Natural killer cell (primary cell): ENCODE measurements at regions of chr21 and their contacts with region 1.

Region 1: DNA sequence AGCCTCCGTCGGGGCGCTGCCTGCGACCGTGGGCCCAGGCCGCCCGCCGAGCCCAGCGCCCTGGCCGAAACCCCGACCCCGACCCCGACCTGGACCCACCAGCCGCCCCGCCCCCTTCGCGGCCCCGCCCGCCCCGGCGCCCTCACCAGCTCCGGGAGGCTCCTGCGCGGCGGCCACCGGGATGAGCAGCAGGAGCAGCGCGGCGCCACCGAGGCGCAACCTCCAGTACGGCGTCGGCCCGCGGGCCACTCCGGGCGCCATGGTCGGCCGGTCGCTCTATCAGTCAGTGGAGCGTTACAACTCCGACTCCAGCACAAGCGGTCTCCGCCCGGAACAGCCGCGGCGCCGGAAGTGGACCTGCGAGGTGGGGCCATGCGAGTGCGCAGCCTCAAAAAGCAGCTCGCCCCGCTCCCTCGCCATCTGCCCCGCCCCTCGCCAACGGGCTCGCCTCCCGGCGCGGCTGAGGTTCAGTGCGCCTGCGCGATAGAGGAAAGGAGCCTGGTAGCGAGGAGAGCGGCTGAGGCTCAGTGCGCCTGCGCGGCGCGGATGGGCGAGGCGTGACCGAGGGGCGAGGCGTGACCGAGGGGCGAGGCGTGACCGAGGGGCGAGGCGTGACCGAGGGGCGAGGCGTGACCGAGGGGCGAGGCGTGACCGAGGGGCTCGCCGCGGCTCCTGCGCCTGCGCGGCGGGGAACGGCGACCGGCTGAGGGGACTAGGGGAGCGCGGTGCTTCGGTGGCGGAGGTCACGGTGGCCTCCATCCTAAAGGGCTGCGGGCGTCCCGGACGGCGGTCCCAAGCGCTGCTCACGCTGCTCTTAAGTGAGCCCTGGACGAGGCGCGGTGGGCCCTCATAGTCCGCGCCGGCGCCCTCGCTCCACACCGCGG is at the start of gene PTTG1IP:
- DNase-seq: peak; percentile 98 to 100
- ATAC-seq: peak; percentile 82 to 91 (median 83)
- H3K4me3 ChIP-seq: peak within 1 kb of the TSS; percentile 52
- H3K4me3 Mint-ChIP-seq: peak within 1 kb of the TSS; percentile 94
- H3K27ac ChIP-seq: peak within 1 kb of the TSS; percentile 85
- H3K27ac Mint-ChIP-seq: peak within 1 kb of the TSS; percentile 92 to 93
- H3K4me1 ChIP-seq: peaks cover 54% of the 10 kb centered on the region
- H3K4me1 Mint-ChIP-seq: peaks cover 47 to 50% of the 10 kb centered on the region in 2 donors
- H3K27me3 ChIP-seq: no peaks in the 10 kb centered on the region
- H3K27me3 Mint-ChIP-seq: no peaks in the 10 kb centered on the region
- CTCF ChIP-seq: no peak
- total RNA-seq, gene PTTG1IP: 96.8 to 144 (median 126) TPM

Region 2: DNA sequence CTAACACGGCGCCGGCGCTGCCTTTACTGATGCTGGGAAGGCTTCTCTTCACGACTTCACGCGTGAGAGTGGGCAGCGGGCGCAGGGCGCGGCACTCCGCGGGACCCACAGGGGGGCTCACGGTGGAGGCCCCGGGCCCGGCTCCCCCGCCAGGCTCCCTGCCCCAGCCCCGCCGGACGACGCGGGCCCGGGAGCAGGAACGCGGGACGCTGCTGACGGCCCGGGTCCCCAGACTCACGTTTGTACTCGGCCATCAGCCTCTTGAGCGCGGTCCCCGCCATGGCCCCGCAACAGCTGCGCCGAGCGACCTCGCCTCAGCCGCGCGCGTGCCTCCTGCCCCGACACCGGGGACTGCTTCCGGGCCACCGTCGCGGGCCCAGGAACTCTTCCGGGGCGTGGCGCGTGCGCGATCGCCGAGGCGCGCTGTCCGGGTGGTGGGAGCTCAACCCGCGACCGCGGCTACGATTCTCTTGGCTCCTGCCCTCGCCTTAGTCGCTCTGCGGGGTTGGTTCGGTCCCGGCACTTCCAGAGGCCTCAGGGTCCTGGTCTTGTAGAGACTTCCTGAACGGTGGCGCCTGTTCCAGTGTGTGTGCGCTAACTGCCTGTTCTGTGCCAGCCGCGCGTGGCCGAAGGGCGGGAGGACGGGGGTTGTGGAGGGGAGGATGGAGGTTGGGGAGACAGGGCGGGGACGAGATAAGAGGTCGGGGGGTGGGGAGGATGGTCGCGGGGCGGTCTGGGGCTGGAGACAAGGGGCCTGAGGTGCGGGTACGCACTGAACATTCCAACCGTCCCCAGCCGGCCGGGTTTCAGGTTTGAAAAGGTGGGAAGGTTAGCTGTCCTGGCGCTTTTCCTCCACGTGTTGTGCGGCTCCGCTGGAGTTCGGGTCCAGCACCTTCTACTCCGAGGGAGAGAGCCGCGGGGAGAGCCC is 71.9 kb before region 1 on chr21 and contains the start of gene UBE2G2:
- intact Hi-C with region 1: loop called (anchors 1 kb)
- DNase-seq: peak; percentile 89 to 93
- ATAC-seq: peak; percentile 94 to 95 (median 94)
- H3K4me3 ChIP-seq: peak within 1 kb of the TSS; percentile 90
- H3K4me3 Mint-ChIP-seq: peak within 1 kb of the TSS; percentile 94
- H3K27ac ChIP-seq: peak within 1 kb of the TSS; percentile 64
- H3K27ac Mint-ChIP-seq: peak within 1 kb of the TSS; percentile 79 to 85
- H3K4me1 ChIP-seq: peaks cover 20% of the 10 kb centered on the region
- H3K4me1 Mint-ChIP-seq: peaks cover 35 to 41% of the 10 kb centered on the region in 2 donors
- H3K27me3 ChIP-seq: no peaks in the 10 kb centered on the region
- H3K27me3 Mint-ChIP-seq: no peaks in the 10 kb centered on the region
- CTCF ChIP-seq: no peak
- total RNA-seq, gene UBE2G2: 89.1 to 109 (median 107) TPM

Region 3: DNA sequence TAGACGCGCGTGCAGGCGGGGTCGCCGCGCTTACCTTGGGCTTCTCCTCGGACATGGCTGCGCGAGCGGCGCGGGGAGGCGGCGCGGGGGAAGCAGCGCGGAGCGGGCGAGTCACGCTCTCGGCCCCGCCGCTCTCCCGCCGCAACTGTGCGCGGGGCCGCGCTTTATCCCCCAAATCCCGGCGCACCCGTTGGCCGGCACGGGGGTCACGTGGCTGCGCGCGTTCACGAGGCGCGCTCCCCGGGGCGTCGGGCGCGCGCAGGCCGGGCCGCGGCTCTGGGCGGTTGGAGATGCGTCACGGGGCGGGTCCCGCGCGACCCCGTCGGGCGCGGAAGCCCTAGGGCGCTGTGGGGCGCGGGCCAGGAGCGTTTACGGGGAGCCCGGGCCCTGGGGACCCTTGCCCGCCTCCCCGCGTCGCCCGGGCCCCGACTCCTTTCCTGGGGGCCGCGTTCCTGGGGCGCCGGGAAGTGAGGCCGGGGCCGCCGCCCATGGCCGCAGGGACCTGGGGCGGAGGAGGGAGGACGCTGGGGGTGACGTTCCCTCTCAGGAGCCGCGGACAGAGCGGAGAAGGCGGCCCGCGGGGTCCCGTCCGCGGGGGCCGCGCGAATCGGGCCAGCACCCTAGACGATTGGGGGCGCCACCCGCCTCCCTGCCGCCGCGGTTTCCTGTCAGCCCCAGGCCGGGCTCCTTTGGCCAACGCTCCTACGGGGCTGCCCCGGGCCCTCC is 55.5 kb before region 1 on chr21 and contains the start of gene SUMO3:
- intact Hi-C with region 1: loop called (anchors 2 kb)
- DNase-seq: peak; percentile 93 to 95
- ATAC-seq: peak; percentile 73 to 87 (median 74)
- H3K4me3 ChIP-seq: peak within 1 kb of the TSS; percentile 43
- H3K4me3 Mint-ChIP-seq: peak within 1 kb of the TSS; percentile 79
- H3K27ac ChIP-seq: peak within 1 kb of the TSS; percentile 73
- H3K27ac Mint-ChIP-seq: peak within 1 kb of the TSS in 1 of 2 donors; percentile 82
- H3K4me1 ChIP-seq: peaks cover 14% of the 10 kb centered on the region
- H3K4me1 Mint-ChIP-seq: peaks cover 6 to 8% of the 10 kb centered on the region in 2 donors
- H3K27me3 ChIP-seq: no peaks in the 10 kb centered on the region
- H3K27me3 Mint-ChIP-seq: no peaks in the 10 kb centered on the region
- CTCF ChIP-seq: no peak
- total RNA-seq, gene SUMO3: 64.0 to 70.1 (median 65.2) TPM